K562 (cell line): ENCODE measurements at regions of chr5 and their contacts with region 1.

Region 1: DNA sequence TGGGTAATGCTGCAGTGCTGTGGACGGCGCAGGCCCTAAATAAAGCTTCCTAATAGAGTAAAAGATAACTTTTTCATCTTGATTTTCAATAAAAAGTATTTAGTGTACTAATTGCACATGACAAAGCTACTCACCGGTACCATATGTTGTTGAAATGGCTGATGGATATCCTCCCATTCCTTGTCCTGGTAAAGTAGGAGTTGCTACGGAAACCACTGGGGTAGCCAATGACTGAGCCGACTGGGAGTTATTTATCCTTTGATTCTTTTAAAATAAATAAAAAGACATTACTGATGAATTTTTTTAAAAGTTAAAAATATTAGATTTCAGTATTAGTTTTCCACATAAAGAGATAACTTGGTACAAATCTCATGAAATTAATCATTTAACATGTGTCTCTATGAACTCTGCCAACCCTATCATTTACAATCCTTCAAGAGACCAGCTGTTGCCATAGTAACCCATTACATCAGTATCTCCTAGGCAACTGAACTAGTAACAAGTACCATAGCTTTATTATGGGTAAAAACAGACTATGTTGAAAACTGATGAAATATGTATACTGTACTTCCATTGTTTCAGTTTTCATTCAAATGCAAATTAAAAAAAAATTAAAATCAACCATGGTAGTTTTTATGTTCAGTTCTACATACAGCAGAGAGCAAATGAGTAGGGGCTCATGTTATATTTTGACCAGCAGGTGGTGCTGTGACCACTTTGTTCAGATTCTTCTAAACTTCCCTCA is 153.7 kb downstream of the MEF2C start:
- DNase-seq: peak; percentile 43 to 82 (median 58)
- ATAC-seq: peak; percentile 86
- H3K4me3 ChIP-seq: no peak overlapping the region
- H3K27ac ChIP-seq: no peak overlapping the region
- H3K4me1 ChIP-seq: peaks cover 0 to 4% of the 10 kb centered on the region in 2 experiments; a peak in 1 of 5 replicates
- H3K27me3 ChIP-seq: no peaks in the 10 kb centered on the region
- CTCF ChIP-seq: peak; percentile 41 to 78 (median 63); a peak in 5 of 6 replicates
- EP300 ChIP-seq: no peak
- POLR2A ChIP-seq: no peak
- RAD21 ChIP-seq: peak; percentile 87 to 89

Region 2: GRCh38 chr5:88883059-88883835 is 154.0 kb after region 1 on chr5 and contains the start of gene MEF2C:
- CTCF ChIA-PET with region 1: no interaction called
- POLR2A ChIA-PET with region 1: no interaction called
- in situ Hi-C with region 1: no loop called
- intact Hi-C with region 1: loop called (anchors 2 kb)
- DNase-seq: peak; percentile 84 to 89 (median 86)
- ATAC-seq: peak; percentile 74
- H3K4me3 ChIP-seq: peak within 1 kb of the TSS; percentile 55
- H3K27ac ChIP-seq: peak within 1 kb of the TSS; percentile 87
- H3K4me1 ChIP-seq: peaks cover 3 to 8% of the 10 kb centered on the region in 2 experiments; a peak in 4 of 5 replicates
- H3K27me3 ChIP-seq: no peaks in the 10 kb centered on the region
- CTCF ChIP-seq: no peak
- EP300 ChIP-seq: peak; percentile 22; the same call in 1 of the 2 replicates
- POLR2A ChIP-seq: peak; percentile 59; the same call in 1 of the 2 replicates
- RAD21 ChIP-seq: no peak
- polyA plus RNA-seq, gene MEF2C: 48.2 to 66.3 TPM

Region 3: GRCh38 chr5:89277816-89278215 is 548.6 kb after region 1 on chr5:
- CTCF ChIA-PET with region 1: no interaction called
- POLR2A ChIA-PET with region 1: no interaction called
- in situ Hi-C with region 1: no loop called
- intact Hi-C with region 1: loop called (anchors 10 kb)
- DNase-seq: no peak
- ATAC-seq: no peak
- H3K4me3 ChIP-seq: no peak overlapping the region
- H3K27ac ChIP-seq: no peak overlapping the region
- H3K4me1 ChIP-seq: peaks cover 0 to 22% of the 10 kb centered on the region in 2 experiments; a peak in 3 of 5 replicates
- H3K27me3 ChIP-seq: no peaks in the 10 kb centered on the region
- CTCF ChIP-seq: no peak
- EP300 ChIP-seq: no peak
- POLR2A ChIP-seq: no peak
- RAD21 ChIP-seq: no peak

Region 4: GRCh38 chr5:90184764-90185163 is 1455.5 kb after region 1 on chr5:
- CTCF ChIA-PET with region 1: no interaction called
- POLR2A ChIA-PET with region 1: no interaction called
- in situ Hi-C with region 1: no loop called
- intact Hi-C with region 1: loop called (anchors 5 kb)
- DNase-seq: no peak
- ATAC-seq: no peak
- H3K4me3 ChIP-seq: no peak overlapping the region
- H3K27ac ChIP-seq: no peak overlapping the region
- H3K4me1 ChIP-seq: no peaks in the 10 kb centered on the region
- H3K27me3 ChIP-seq: no peaks in the 10 kb centered on the region; a peak in 1 of 5 replicates
- CTCF ChIP-seq: no peak
- EP300 ChIP-seq: no peak
- POLR2A ChIP-seq: no peak
- RAD21 ChIP-seq: no peak

Region 5: DNA sequence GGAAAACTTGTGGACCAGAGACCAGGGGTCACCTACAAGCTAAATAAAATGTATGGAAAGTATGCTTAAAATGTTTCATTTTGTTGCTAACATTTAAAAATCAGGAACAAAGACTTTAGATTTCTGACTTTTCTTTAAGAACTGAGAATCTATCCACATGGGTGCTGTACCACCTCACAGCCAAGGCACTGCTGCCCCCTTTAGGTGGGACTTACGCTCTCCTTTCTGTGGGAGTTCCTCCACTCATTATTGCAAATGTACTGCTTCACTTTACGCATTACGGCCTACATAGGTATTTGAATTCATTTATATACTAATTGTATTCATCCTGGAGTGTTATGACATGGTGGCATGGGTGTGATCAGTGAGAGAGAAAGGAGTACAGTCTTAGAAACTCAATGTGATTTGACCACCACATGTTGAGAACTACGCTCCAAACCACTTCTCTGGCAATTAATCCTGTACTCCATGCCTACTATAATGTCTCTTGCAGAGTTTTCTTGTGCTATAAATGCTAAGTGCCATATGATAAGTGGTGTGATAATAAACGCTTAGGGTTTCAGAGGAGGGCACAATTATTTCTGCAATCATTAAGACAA is 1705.0 kb after region 1 on chr5:
- CTCF ChIA-PET with region 1: interaction called, 3 read pairs
- POLR2A ChIA-PET with region 1: no interaction called
- in situ Hi-C with region 1: no loop called
- intact Hi-C with region 1: loop called (anchors 2 kb)
- DNase-seq: peak; percentile 29 to 77 (median 44)
- ATAC-seq: peak; percentile 98
- H3K4me3 ChIP-seq: no peak overlapping the region
- H3K27ac ChIP-seq: no peak overlapping the region
- H3K4me1 ChIP-seq: no peaks in the 10 kb centered on the region
- H3K27me3 ChIP-seq: no peaks in the 10 kb centered on the region
- CTCF ChIP-seq: peak; percentile 79 to 90 (median 87)
- EP300 ChIP-seq: no peak
- POLR2A ChIP-seq: no peak
- RAD21 ChIP-seq: peak; percentile 58 to 85